ENCODE measurements at regions of chr12 and their contacts with region 1.

Region 1: GRCh38 chr12:130041983-130042812 is 120.1 kb upstream of the FZD10 start:
- DNase-seq: no peak
- H3K4me3 ChIP-seq: no peak overlapping the region
- H3K27ac ChIP-seq: no peak overlapping the region
- H3K4me1 ChIP-seq: no peaks in the 10 kb centered on the region
- H3K27me3 ChIP-seq: no peaks in the 10 kb centered on the region
- CTCF ChIP-seq: peak; percentile 6 to 60 (median 42)

Region 2: DNA sequence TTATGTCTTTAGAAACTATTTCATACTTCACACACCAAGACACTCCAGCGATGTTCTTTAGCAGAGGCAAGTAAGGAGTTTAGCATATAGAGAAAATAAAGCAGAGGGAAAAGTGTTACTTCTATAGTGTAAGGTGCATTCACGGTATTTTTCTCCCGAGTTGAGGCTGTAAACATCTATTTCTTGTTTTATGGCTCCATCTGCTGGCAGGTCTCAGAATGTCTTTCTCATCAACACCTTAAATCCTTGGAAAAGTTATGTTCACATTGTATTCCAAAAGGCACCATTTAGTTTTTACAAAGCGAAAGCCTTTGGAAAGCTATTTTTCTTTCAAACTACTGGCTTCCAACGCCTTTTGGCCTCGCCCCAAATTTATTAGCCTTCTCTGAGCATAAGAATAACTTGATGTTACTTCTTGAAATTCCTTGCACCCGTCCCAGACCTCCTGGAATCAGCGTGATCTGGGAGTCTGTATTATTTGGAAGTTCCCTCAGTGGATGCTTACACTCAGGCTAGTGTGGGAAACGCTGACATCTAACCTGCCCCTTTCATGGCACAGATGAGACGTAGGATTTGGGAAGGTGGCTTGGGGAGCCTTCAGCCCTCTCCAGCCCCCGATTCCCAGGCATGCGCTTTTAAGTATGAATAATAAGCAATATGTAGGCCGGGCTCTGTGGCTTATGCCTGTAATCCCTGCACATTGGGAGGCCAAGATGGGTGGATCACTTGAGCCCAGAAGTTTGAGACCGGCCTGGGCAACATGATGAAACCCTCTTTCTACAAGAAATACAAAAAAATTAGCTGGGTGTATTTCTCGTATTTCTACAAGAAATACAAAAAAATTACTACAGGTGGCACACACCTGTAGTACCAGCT is 293.6 kb after region 1 on chr12:
- intact Hi-C with region 1: loop called (anchors 1 kb)
- DNase-seq: no peak
- H3K4me3 ChIP-seq: no peak overlapping the region
- H3K27ac ChIP-seq: no peak overlapping the region
- H3K4me1 ChIP-seq: no peaks in the 10 kb centered on the region
- H3K27me3 ChIP-seq: no peaks in the 10 kb centered on the region
- CTCF ChIP-seq: peak; percentile 22 to 58 (median 43)

Region 3: DNA sequence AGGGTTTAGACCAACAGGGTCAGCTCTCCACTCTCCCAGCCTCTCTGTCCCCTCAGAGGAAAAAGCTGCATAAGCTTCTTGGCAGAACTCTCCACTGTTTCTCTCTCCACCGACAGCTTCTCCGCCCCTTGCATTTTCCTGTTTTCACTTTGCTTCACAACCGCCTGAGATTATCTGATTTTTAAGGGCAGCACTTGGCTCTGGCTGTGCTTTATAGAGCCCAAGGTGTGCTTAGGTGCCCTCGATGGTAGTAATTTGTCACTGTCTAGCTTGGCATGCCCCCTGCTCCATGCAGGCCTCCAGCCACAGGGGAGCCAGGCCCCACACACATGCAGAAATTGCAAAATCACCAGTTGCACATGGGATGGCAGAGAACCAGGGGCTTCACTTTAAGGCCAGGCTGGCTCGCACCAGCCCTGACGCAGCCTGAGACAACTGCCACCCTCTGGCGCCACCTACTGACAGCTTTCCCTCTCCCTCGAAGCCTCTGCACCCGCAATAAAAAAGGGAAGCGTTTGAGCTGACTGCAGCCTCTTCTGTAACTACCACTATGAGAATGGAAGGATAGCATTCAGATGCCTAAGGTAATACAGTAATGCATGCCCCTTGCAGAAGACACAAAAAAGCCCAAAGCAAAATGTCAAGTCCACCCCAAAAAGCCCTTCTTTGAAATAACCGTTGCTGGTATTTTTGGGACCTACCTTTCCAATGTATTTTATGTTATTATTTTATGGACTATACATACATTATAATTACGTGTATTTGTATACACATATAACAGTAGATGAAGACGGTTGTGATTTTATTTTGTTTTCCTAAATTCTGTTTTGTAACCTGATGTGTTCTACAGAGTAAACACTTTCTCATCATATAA is 705.9 kb after region 1 on chr12:
- intact Hi-C with region 1: loop called (anchors 10 kb)
- DNase-seq: peak in 1 of 2 donors; percentile 77
- H3K4me3 ChIP-seq: no peak overlapping the region
- H3K27ac ChIP-seq: no peak overlapping the region
- H3K4me1 ChIP-seq: no peaks in the 10 kb centered on the region
- H3K27me3 ChIP-seq: no peaks in the 10 kb centered on the region
- CTCF ChIP-seq: peak; percentile 43 to 77 (median 62)